B cell (primary cell): ENCODE measurements at regions of chr12 and their contacts with region 1.

Region 1: GRCh38 chr12:12704593-12705230 is 8.7 kb upstream of the GPR19 start:
- DNase-seq: peak; percentile 77
- ATAC-seq: peak; percentile 97
- H3K4me3 ChIP-seq: no peak overlapping the region
- H3K4me3 Mint-ChIP-seq: no peak overlapping the region
- H3K27ac ChIP-seq: no peak overlapping the region
- H3K27ac Mint-ChIP-seq: no peak overlapping the region
- H3K4me1 ChIP-seq: peaks cover 0 to 3% of the 10 kb centered on the region in 2 donors
- H3K4me1 Mint-ChIP-seq: peaks cover 7% of the 10 kb centered on the region
- H3K27me3 ChIP-seq: no peaks in the 10 kb centered on the region
- H3K27me3 Mint-ChIP-seq: no peaks in the 10 kb centered on the region
- CTCF ChIP-seq: peak; percentile 86

Region 2: DNA sequence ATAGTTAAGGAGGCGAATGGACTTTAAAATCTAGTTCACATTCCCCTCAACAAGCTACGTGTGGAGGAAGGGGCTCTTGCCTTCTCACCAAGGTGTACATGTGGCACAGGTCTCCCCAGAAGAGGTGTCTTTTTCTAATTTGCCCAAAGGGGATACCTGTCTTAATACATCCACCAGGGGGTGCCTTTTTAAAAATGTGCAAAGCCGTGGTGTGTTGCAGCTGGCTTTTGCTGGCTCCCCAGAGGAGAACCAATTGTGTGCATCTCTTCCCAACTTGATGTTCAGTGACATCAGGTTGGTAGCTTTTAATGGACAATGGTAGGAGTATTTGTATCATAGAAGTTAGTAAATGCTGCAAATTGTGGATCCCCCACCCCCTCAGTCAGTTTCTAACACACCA is 59.2 kb before region 1 on chr12:
- CTCF ChIA-PET with region 1: interaction called, 49 read pairs
- POLR2A ChIA-PET with region 1: interaction called, 7 read pairs
- intact Hi-C with region 1: loop called (anchors 1 kb)
- DNase-seq: peak; percentile 75
- ATAC-seq: peak; percentile 83
- H3K4me3 ChIP-seq: no peak overlapping the region
- H3K4me3 Mint-ChIP-seq: no peak overlapping the region
- H3K27ac ChIP-seq: no peak overlapping the region
- H3K27ac Mint-ChIP-seq: no peak overlapping the region
- H3K4me1 ChIP-seq: no peaks in the 10 kb centered on the region
- H3K4me1 Mint-ChIP-seq: peaks cover 4% of the 10 kb centered on the region
- H3K27me3 ChIP-seq: no peaks in the 10 kb centered on the region
- H3K27me3 Mint-ChIP-seq: no peaks in the 10 kb centered on the region
- CTCF ChIP-seq: peak; percentile 71

Region 3: GRCh38 chr12:12872139-12872881 is 167.6 kb after region 1 on chr12:
- CTCF ChIA-PET with region 1: no interaction called
- POLR2A ChIA-PET with region 1: no interaction called
- intact Hi-C with region 1: no loop called
- DNase-seq: no peak
- ATAC-seq: no peak
- H3K4me3 ChIP-seq: no peak overlapping the region
- H3K4me3 Mint-ChIP-seq: no peak overlapping the region
- H3K27ac ChIP-seq: no peak overlapping the region
- H3K27ac Mint-ChIP-seq: no peak overlapping the region
- H3K4me1 ChIP-seq: no peaks in the 10 kb centered on the region
- H3K4me1 Mint-ChIP-seq: no peaks in the 10 kb centered on the region
- H3K27me3 ChIP-seq: no peaks in the 10 kb centered on the region
- H3K27me3 Mint-ChIP-seq: peaks cover 3% of the 10 kb centered on the region
- CTCF ChIP-seq: no peak

Region 4: GRCh38 chr12:12927211-12928079 is 222.7 kb after region 1 on chr12:
- CTCF ChIA-PET with region 1: no interaction called
- POLR2A ChIA-PET with region 1: no interaction called
- intact Hi-C with region 1: no loop called
- DNase-seq: peak; percentile 62
- ATAC-seq: no peak
- H3K4me3 ChIP-seq: peak overlapping the region in 2 of 5 experiments; percentile 25 to 62
- H3K4me3 Mint-ChIP-seq: no peak overlapping the region
- H3K27ac ChIP-seq: no peak overlapping the region
- H3K27ac Mint-ChIP-seq: no peak overlapping the region
- H3K4me1 ChIP-seq: no peaks in the 10 kb centered on the region
- H3K4me1 Mint-ChIP-seq: no peaks in the 10 kb centered on the region
- H3K27me3 ChIP-seq: no peaks in the 10 kb centered on the region
- H3K27me3 Mint-ChIP-seq: peaks cover 12% of the 10 kb centered on the region
- CTCF ChIP-seq: no peak